ENCODE measurements at regions of chr13 and their contacts with region 1.

Region 1: GRCh38 chr13:31134039-31134711 is 27.5 kb downstream of the HSPH1 start:
- DNase-seq: no peak
- H3K4me3 Mint-ChIP-seq: peak overlapping the region; percentile 27
- H3K27ac Mint-ChIP-seq: peak overlapping the region; percentile 95
- H3K4me1 Mint-ChIP-seq: peaks cover 67% of the 10 kb centered on the region
- H3K27me3 Mint-ChIP-seq: no peaks in the 10 kb centered on the region

Region 2: GRCh38 chr13:31073859-31074718 is 60.1 kb before region 1 on chr13:
- intact Hi-C with region 1: loop called (anchors 1 kb)
- DNase-seq: no peak
- H3K4me3 Mint-ChIP-seq: no peak overlapping the region
- H3K27ac Mint-ChIP-seq: no peak overlapping the region
- H3K4me1 Mint-ChIP-seq: peaks cover 12% of the 10 kb centered on the region
- H3K27me3 Mint-ChIP-seq: no peaks in the 10 kb centered on the region

Region 3: GRCh38 chr13:31150315-31150985 is 16.3 kb after region 1 on chr13:
- intact Hi-C with region 1: loop called (anchors 1 kb)
- DNase-seq: no peak
- H3K4me3 Mint-ChIP-seq: no peak overlapping the region
- H3K27ac Mint-ChIP-seq: peak overlapping the region; percentile 2
- H3K4me1 Mint-ChIP-seq: peaks cover 51% of the 10 kb centered on the region
- H3K27me3 Mint-ChIP-seq: no peaks in the 10 kb centered on the region